ENCODE measurements at regions of chr3 and their contacts with region 1.

Region 1: DNA sequence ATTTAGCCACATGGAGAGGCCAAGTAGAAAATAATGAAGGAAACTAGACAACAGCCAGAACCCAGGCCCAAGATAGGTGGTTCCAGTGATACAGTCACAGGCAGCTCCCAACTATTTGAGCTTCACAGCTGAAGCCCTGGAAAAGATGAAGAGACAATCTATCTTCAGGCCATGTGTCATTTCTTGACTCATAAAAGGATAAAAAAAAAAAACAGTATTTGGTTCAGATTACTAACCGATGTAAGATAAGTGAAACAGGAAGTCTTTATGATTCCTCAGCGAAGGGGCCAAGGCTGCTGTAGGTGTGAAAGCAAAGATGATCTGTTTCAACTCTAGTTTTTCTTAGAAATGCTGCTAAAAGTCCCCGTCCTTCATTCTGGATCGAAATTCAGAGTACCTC is 394.6 kb downstream of the ZNF385D start:
- DNase-seq: no peak
- ATAC-seq: no peak

Region 2: GRCh38 chr3:20739814-20740213 is 616.6 kb before region 1 on chr3:
- intact Hi-C with region 1: loop called (anchors 10 kb)
- DNase-seq: no peak
- ATAC-seq: no peak

Measured in sciatic nerve (tissue), 2 donors.